Activated CD4-positive, alpha-beta T cell treated with anti-CD3 and anti-CD28 coated beads, Interleukin-2, amount 10 ng/mL, durations not matched to agents 24 days and 14 days (primary cell): ENCODE measurements at regions of chr11 and their contacts with region 1.

Region 1: DNA sequence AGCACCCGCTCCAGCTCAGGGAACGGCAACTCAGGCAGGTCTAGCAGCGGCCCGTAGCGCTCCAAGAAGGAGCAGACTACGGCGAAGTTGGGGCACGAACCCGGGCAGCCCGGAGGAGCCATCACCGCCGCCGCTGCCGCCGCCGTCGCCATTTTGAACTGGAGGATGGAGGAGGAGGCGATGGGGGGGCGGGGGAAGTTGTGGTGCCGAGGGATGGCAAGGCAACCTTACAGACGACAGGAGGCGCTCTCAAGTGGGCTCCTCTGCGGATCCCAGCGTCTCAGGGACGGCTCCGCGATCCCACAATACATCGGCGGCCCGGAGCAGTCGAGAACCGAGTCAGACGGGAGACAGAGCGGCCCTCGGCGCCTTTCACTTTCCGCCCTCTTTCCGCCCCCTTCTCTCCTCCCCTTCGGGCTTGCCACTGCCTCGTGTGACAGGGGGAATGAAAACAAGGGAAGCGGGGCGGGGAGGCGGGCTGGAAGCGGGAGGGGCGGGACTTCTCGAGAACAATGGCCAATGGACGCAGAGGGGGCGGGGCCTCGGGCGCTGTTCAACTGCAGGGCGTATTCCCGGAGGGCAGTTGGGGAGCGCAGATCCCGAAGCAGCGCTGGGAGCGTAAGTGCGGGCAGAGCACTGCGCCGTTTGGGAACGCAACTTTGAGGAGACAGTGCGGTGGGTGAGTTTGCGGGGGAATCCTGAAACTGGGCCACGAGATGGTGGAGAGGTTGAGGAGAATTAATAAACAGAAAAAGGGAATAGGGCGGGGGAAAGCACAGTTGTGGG is at the starts of genes AAMDC and RSF1:
- DNase-seq: peak; percentile 98
- H3K4me3 Mint-ChIP-seq: peak within 1 kb of the TSS; percentile 98
- H3K27ac Mint-ChIP-seq: peak within 1 kb of the TSS; percentile 92
- H3K4me1 Mint-ChIP-seq: peaks cover 29% of the 10 kb centered on the region
- H3K27me3 Mint-ChIP-seq: no peaks in the 10 kb centered on the region
- total RNA-seq, gene AAMDC: 1.3 and 1.4 TPM in 2 replicates
- total RNA-seq, gene RSF1: 45.3 and 47.6 TPM in 2 replicates

Region 2: GRCh38 chr11:77637345-77638165 is 183.2 kb before region 1 on chr11 and contains the start of gene CLNS1A:
- intact Hi-C with region 1: loop called (anchors 1 kb)
- DNase-seq: peak; percentile 94
- H3K4me3 Mint-ChIP-seq: peak within 1 kb of the TSS; percentile 97
- H3K27ac Mint-ChIP-seq: peak within 1 kb of the TSS; percentile 95
- H3K4me1 Mint-ChIP-seq: peaks cover 30% of the 10 kb centered on the region
- H3K27me3 Mint-ChIP-seq: no peaks in the 10 kb centered on the region
- total RNA-seq, gene CLNS1A: 177 and 186 TPM in 2 replicates

Region 3: GRCh38 chr11:77908835-77909234 is 88.1 kb after region 1 on chr11:
- intact Hi-C with region 1: no loop called
- DNase-seq: no peak
- H3K4me3 Mint-ChIP-seq: no peak overlapping the region
- H3K27ac Mint-ChIP-seq: no peak overlapping the region
- H3K4me1 Mint-ChIP-seq: no peaks in the 10 kb centered on the region
- H3K27me3 Mint-ChIP-seq: no peaks in the 10 kb centered on the region

Region 4: DNA sequence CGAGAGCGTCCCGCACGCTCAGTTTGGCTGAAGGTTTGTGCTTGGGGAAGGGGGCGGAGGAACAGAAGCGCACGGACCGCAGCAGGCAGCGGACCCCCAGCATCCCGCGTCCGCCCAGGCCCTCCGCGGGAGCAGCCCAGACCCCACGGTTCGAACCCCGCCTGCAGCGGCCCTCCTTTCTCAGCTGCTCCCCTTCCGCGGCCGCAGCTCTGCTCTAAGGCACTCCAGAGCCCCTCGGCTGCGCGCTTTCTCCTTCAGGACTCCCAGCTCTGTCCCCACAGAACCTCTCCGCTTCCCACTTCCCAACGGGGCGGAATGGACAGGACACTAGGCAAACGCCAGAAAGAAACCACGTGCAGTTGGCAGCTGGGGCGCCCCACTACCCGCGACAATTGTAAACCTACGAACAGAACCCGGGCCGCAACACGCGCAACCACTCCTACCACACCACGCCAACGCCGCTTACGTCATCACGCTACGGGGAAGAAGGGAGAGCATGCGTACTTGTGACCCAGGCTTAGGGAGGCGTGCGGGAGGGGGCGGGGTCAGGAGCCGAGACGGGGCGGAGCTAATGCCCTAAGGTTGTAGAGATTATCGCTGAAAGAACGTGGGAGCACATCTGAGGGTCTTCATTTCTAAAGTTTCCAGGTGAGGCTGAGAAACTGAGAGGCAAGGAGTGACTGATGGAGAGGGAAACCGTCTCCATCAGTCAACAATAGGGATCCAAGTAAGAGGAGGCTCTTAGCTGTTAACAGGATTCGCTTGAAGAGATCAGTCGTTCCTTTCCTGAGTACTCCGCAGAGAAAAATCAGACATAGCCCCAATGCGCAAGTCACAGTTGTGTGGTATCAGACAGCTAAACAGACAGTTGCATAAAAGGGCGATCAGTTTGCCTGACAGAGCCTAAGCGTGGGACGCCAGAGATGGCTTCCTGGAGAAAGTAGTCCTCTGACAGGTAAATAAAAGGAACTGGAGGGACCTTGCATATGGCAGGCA is 753.9 kb after region 1 on chr11 and contains the start of gene NARS2:
- intact Hi-C with region 1: loop called (anchors 2 kb)
- DNase-seq: peak; percentile 99
- H3K4me3 Mint-ChIP-seq: peak within 1 kb of the TSS; percentile 94
- H3K27ac Mint-ChIP-seq: peak within 1 kb of the TSS; percentile 92
- H3K4me1 Mint-ChIP-seq: peaks cover 28% of the 10 kb centered on the region
- H3K27me3 Mint-ChIP-seq: no peaks in the 10 kb centered on the region
- total RNA-seq, gene NARS2: 38.0 and 43.3 TPM in 2 replicates